Esophagus muscularis mucosa (tissue), 4 donors: ENCODE measurements at regions of chr10 and their contacts with region 1.

Region 1: GRCh38 chr10:70758757-70759514 is 26.2 kb downstream of the TBATA start:
- DNase-seq: no peak
- H3K4me3 ChIP-seq: no peak overlapping the region
- H3K27ac ChIP-seq: no peak overlapping the region
- H3K4me1 ChIP-seq: peaks cover 4 to 15% (median 8%) of the 10 kb centered on the region in 4 donors
- H3K27me3 ChIP-seq: peaks cover 0 to 10% (median 0%) of the 10 kb centered on the region in 4 donors
- CTCF ChIP-seq: peak; percentile 66 to 72 (median 70)
- EP300 ChIP-seq: no peak
- POLR2A ChIP-seq: no peak

Region 2: DNA sequence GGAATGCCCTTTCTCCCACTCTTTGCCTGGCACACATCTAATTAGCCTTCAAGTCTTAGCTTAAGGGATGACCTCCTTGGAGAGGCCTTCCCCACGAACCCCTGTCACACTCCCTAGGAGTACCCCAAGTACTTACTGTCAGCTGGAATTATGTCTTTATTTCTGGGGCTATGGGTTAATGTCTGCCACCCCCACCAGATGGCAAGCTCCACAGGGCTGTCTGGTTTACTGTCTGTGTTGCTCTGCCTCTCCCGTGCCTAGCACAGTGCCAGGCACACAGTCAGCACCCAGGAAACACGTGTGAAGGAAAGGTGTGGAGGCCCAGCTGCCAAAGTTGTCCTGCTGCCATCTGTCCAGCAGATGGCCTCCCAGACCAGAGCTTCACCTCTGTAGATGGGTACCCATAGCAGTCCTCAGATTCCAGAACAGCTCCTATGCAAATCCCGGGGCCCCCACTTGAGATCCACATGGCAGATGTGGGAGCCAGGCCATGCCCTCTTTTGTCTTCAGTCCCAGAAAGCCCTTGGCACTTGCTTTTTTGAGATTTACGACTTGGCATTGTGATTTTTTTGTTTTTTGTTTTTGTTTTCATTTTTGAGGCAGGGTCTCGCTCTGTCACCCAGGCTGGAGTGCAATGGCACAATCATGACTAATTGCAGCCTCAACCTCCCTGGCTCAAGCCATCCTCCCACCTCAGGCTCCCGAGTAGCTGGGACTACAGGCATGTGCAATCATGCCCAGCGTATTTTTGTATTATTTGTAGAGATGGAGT is 297.5 kb before region 1 on chr10:
- intact Hi-C with region 1: loop called (anchors 5 kb)
- DNase-seq: no peak
- H3K4me3 ChIP-seq: no peak overlapping the region
- H3K27ac ChIP-seq: peak overlapping the region; percentile 31 to 87 (median 50)
- H3K4me1 ChIP-seq: peaks cover 39 to 57% (median 53%) of the 10 kb centered on the region in 4 donors
- H3K27me3 ChIP-seq: no peaks in the 10 kb centered on the region
- CTCF ChIP-seq: peak; percentile 80 to 92 (median 90)
- EP300 ChIP-seq: no peak
- POLR2A ChIP-seq: no peak

Region 3: DNA sequence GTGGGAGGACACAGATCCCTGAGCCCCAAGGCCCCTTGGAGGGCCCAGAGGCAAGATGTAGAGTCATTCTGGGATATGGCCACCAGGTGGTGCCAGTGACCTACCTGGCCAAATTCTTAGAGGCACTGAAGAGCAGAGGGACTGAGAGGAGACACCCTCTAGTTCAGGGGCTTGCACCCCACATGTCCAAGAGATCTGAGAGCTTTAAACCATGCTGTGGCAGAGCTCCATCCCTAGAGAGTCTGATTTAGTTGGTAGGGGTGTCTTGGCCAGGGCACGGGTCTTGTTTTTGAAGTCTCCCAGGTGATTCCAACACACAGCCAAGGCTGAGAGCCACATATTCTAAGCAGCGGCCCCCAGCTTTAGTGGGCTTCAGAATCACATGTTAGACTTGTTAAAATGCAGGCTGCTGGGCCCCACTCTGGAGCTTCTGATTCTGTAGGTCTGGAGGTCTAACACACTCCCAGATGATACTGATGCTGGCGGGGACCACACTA is 208.9 kb before region 1 on chr10:
- intact Hi-C with region 1: loop called (anchors 2 kb)
- DNase-seq: peak; percentile 95
- H3K4me3 ChIP-seq: no peak overlapping the region
- H3K27ac ChIP-seq: no peak overlapping the region
- H3K4me1 ChIP-seq: peaks cover 4 to 21% (median 8%) of the 10 kb centered on the region in 4 donors
- H3K27me3 ChIP-seq: no peaks in the 10 kb centered on the region
- CTCF ChIP-seq: peak; percentile 88 to 92 (median 91)
- EP300 ChIP-seq: no peak
- POLR2A ChIP-seq: no peak